ENCODE measurements at regions of chr15 and their contacts with region 1.

Region 1: DNA sequence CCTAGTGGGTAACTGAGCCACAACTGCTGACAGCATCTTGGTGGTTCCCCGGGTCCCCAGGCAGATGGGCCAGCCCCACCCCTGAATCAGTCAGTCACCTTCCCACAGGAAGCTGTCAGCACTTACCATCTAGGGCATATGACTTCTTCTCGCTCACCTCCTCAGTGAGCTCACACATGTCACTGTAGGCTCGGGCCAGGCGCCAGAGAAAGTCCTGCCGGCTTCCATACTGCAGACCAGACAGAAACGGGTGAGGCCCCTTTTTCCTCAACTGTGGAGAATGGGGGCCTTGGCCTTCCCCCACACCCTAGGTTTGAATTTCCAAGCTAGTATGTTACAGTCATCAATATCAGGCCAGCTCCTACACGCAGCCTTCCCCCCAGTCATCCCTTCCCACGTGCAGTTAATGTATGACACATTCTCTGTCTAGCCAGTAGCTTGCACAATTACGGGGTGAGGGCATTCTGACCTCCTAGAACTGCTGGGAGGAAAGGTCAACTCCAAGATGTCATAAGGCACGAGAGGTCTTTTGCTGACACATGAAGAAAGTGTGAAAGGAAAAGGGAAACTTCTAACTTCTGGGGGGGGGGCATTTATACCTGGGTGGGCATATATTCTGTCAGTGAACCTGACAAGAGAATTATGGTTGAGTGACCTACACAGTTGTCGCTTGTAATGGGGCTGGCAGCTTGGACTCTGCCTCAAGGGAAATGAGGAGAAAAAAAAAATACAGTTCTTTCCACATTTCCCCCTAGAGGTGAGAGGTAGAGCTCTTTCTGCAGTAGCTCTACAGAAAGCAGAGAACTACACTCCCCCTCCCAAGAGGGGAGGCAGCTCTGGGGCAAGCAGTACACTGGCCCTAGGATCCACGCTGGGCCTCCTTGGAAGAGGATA is 10.9 kb downstream of the RMDN3 start:
- DNase-seq: peak; percentile 85
- H3K4me3 Mint-ChIP-seq: peak overlapping the region; percentile 53
- H3K27ac Mint-ChIP-seq: peak overlapping the region; percentile 95
- H3K4me1 Mint-ChIP-seq: peaks cover 48% of the 10 kb centered on the region
- H3K27me3 Mint-ChIP-seq: no peaks in the 10 kb centered on the region

Region 2: DNA sequence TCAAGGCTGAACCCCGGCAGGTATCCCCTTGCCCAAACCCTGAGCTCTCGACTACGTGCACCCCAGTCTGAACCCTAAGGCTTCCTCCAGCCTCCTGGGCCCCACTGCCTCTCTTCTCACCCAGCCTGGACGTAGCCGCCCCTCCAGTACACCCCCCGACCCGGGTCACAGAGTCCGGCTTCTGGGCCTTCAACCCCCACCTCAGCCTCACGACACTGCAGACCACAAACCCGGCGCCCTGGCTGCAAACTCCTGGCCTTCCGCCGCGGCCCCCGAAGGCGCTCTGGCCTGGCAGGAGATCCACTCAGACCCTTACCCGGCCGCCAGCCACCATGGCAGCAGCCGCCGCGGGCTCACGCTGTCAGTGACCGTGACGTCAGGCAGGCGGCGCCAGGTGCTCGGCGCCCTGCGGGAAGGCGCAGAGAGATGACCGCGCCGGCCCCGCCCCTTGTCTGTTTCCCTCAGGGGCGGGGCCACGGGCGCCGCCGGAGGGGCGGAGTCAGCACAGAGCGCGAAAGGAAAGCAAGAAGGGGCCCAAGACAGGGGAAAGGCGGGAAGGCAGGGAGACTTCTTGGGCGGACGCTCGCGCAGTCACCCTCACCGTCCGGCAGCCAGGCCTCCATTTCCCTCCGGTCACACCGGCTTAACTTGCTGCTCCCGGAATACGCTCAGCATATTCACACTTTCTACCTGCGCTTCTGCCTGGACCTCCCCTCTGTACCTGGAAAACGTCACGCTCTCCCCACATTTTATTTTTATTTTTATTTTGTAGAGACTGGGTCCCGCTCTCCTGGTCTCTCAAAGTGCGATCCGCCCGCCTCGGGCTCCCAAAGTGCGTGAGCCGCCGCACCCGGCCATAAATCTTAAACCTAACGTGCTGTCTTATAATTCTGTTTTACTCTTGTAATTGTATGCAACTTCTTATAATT is 11.0 kb after region 1 on chr15 and contains the start of gene RMDN3:
- CTCF ChIA-PET with region 1: interaction called, 19 read pairs
- POLR2A ChIA-PET with region 1: interaction called, 43 read pairs
- DNase-seq: peak; percentile 95
- H3K4me3 Mint-ChIP-seq: peak within 1 kb of the TSS; percentile 88
- H3K27ac Mint-ChIP-seq: peak within 1 kb of the TSS; percentile 95
- H3K4me1 Mint-ChIP-seq: peaks cover 31% of the 10 kb centered on the region
- H3K27me3 Mint-ChIP-seq: no peaks in the 10 kb centered on the region
- total RNA-seq, gene RMDN3: 28.4 to 30.5 TPM

Region 3: DNA sequence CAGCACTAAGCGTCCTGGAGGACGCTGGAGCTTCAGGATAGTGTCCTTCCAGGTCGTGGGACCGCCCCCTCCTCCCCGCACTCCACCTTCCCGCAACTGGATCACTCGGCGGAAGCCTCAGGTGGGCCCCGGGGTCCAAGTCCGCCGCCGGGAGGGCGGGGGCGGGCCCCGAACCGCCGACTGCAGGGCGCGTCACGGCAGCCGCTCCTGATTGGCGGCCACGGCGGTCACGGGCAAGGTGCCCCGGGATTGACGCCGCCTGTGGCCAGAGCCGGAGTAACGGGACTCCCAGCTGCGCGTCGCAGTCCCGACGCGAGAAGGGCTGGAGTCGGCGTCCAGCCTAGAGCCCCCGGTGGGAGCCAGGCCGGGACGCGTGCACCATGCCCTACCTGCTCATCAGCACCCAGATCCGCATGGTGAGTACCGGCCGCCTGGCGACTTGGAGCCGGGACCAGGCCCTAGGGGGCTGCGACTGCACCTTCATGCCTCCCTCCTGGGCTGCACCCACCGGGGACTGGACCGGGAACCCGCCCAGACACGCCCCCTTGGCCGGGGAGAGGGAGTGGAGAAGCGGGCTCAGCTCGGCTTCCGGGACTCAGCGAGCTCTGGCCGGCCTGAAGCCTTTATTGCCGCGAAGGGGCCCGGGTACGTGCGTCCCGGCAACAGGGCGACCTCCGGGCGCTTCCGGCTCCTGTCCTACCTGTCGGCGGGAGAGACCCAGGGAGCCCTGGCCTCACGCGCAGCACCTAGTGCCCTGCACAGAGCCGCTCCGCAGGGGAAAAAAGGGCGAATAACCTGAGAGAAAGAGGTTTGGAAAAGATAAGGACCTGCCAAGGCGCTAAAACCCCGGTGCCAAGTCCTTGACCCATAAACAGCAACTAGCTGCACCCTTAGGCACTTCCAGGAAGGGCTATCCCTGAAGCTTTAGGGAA is 19.9 kb after region 1 on chr15 and contains the start of gene GCHFR:
- CTCF ChIA-PET with region 1: interaction called, 9 read pairs
- POLR2A ChIA-PET with region 1: interaction called, 18 read pairs
- DNase-seq: peak; percentile 77
- H3K4me3 Mint-ChIP-seq: peak within 1 kb of the TSS; percentile 76
- H3K27ac Mint-ChIP-seq: peak within 1 kb of the TSS; percentile 83
- H3K4me1 Mint-ChIP-seq: peaks cover 44% of the 10 kb centered on the region
- H3K27me3 Mint-ChIP-seq: no peaks in the 10 kb centered on the region
- total RNA-seq, gene GCHFR: 39.4 to 39.6 TPM

Region 4: DNA sequence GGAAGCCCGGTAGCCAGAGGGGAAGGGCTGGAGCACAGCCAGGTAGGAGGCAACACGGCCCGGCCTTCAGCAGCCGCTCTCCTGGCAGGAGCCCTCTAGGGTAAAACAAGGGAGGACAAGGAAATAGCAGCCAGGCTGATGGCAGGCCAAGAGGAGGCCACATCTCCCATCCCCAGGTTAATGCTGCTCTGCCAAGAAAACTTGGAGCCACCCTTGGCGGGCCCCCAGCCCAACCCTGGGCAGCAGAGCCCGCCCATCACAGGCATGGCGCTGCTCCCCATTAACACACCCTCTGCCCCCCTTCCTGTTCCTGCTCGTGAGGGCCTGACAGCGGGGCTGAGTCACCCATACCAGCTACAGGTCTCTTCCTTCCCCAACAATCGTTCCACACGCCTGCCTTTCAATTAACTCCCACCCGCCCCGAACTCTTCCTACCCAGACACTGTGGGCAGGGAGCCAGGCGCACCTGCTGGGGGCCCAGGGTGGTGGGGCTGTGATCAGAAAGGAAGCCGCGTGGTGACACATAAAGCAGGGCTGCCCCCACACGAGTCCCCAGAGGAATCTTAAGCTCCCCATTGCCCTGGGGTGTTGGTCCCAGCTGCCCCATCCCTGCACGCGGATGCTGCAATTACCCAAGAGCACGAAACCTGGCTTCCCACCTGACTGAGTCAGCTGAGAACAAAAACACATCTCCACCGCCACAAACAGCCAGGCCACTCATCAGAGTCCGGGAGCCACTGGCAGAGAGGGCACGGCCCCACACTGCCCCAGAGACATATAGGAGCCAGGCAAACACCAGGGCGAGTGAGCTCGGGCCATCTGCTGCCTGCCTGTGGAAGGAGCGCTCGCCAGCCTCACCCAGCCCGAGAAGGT is 25.3 kb after region 1 on chr15 and contains the start of gene C15orf62:
- CTCF ChIA-PET with region 1: interaction called, 9 read pairs
- POLR2A ChIA-PET with region 1: interaction called, 18 read pairs
- DNase-seq: no peak
- H3K4me3 Mint-ChIP-seq: no peak within 1 kb of the TSS
- H3K27ac Mint-ChIP-seq: peak within 1 kb of the TSS; percentile 62
- H3K4me1 Mint-ChIP-seq: peaks cover 39% of the 10 kb centered on the region
- H3K27me3 Mint-ChIP-seq: no peaks in the 10 kb centered on the region
- total RNA-seq, gene C15orf62: 1.1 to 1.2 TPM

Region 5: GRCh38 chr15:40847205-40847961 is 103.2 kb after region 1 on chr15:
- CTCF ChIA-PET with region 1: no interaction called
- POLR2A ChIA-PET with region 1: no interaction called
- DNase-seq: no peak
- H3K4me3 Mint-ChIP-seq: no peak overlapping the region
- H3K27ac Mint-ChIP-seq: no peak overlapping the region
- H3K4me1 Mint-ChIP-seq: peaks cover 24% of the 10 kb centered on the region
- H3K27me3 Mint-ChIP-seq: peaks cover 18% of the 10 kb centered on the region